BJ (cell line): ENCODE measurements at regions of chr17 and their contacts with region 1.

Region 1: DNA sequence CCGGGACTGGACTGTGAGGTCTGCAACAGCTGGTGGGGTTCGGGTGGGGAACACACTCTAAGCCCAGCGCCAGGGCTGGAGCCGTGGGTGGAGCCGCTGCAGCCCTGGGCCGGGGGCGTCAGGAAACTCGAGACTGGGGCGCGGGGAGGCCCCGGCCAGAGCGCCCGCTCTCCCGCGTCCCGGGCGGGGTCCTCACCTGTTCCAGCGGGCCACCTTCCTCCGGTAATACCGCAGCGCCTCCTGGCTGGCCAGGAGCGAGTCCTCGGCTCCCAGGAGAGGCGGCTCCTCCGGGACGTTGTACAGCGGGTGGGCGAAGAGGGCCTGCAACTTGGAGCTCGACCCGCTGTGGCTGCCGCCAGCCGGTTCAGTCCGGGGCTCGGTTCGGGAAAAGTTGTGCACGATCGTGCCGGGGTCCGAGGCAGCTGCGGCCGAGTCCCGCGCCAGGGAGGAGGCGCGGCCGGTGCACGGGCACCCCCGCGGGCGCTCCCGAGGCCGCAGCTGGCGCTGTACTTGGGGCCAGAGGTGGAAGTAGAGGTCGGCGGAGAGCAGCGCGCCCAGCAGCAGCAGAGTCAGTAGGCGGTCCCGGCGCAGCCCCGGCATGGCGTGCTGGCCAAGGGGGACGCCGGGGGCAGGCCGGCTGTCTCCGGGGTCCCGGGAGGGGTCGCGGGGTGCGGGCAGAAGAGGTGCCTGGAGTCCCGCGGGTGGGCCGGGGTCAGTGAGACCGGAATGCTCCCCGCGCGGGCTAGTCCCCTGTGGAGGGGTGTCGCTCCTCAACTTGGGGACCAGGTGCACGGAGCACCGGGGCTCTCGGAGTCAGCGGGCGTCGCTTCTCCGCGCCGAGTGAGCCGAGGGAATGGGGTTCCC is 868 bp downstream of the FAM20A start:
- DNase-seq: no peak
- H3K4me3 ChIP-seq: peak overlapping the region; percentile 58
- H3K27me3 ChIP-seq: no peaks in the 10 kb centered on the region
- CTCF ChIP-seq: peak; percentile 40

Region 2: DNA sequence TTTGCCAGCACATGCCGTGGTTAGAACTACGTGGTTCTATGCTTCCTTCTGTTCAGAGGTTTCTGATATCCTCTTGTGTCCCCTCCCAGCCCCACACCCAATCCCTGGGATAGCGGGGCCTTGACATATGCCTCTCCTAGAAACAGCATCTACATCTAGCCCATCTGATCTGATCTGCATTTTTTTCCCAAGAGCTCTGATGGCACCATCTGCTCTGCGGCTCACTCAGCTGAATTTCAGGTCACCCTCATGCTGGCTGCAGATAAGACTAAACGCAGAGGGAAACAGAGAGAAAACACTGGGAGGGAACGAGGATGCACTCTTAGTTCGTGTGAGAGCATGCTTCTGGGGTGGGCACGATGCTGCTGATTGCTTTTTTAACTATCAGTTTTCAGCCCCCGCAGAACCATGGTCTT is 153.7 kb before region 1 on chr17:
- CTCF ChIA-PET with region 1: no interaction called
- POLR2A ChIA-PET with region 1: no interaction called
- DNase-seq: no peak
- H3K4me3 ChIP-seq: no peak overlapping the region
- H3K27me3 ChIP-seq: no peaks in the 10 kb centered on the region
- CTCF ChIP-seq: no peak

Region 3: DNA sequence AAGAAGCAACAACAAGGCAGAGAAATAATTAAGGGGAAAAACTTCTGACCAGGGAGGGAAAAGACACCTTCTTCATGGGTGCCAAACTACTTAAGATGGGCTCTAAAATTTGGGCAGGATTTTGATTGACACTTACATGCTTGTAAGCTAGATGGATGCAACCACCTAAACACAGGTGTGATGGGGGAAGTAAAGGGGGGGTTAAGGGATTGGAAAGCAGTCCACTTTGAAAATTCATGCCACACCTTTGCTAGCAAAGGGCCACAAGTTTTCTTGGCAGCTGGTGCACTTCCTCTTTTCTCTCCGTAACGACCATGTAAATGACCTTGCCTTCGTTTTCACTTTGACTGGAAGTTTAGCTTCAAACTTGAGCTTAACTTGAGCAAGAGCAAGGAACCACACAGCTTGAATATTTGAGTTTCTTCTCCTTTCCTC is 102.4 kb before region 1 on chr17:
- CTCF ChIA-PET with region 1: no interaction called
- POLR2A ChIA-PET with region 1: no interaction called
- DNase-seq: no peak
- H3K4me3 ChIP-seq: no peak overlapping the region
- H3K27me3 ChIP-seq: no peaks in the 10 kb centered on the region; the same call in 1 of the 2 replicates
- CTCF ChIP-seq: no peak

Region 4: GRCh38 chr17:68533887-68534694 is 66.2 kb before region 1 on chr17:
- CTCF ChIA-PET with region 1: interaction called, 10 read pairs
- POLR2A ChIA-PET with region 1: no interaction called
- DNase-seq: peak; percentile 21
- H3K4me3 ChIP-seq: no peak overlapping the region
- H3K27me3 ChIP-seq: no peaks in the 10 kb centered on the region
- CTCF ChIP-seq: peak; percentile 51

Region 5: GRCh38 chr17:68634403-68634802 is 34.1 kb after region 1 on chr17:
- CTCF ChIA-PET with region 1: no interaction called
- POLR2A ChIA-PET with region 1: no interaction called
- DNase-seq: no peak
- H3K4me3 ChIP-seq: no peak overlapping the region
- H3K27me3 ChIP-seq: no peaks in the 10 kb centered on the region
- CTCF ChIP-seq: no peak